HEK293 (cell line): ENCODE measurements at regions of chr7 and their contacts with region 1.

Region 1: DNA sequence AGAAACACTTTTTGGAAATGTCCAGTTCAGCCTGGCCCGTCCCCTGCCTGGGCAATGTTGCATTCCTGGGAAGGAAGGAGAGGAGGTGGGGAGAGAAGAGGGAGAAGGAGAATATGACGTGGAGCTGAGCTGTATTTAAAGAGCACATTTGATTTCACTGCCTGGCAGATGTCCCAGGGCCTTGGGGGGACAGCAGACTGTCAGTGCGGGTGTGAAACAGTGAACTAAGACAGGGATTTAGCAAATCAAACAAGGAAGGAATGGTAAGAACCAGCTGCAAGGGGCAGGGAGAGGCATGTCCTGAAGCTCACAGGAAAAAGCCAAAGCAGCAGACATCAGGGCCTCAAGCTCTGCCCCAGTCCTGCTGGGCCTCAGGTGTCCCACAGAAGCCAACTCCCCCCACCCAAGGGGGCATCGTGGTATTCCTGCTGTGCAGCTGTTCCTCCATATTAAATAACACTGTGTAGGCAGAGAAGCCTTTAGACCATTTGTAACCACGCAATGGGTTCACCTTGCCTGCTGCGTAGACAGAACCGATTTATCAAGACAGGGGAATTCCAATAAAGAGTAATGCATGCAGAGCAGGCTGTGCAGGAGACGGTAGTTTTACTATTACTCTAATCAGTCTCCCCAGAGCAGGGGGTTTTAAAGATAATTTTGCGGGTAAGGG is 18.2 kb downstream of the LEP start:
- H3K4me3 ChIP-seq: no peak overlapping the region
- H3K27ac ChIP-seq: no peak overlapping the region
- H3K4me1 ChIP-seq: no peaks in the 10 kb centered on the region
- CTCF ChIP-seq: no peak

Region 2: DNA sequence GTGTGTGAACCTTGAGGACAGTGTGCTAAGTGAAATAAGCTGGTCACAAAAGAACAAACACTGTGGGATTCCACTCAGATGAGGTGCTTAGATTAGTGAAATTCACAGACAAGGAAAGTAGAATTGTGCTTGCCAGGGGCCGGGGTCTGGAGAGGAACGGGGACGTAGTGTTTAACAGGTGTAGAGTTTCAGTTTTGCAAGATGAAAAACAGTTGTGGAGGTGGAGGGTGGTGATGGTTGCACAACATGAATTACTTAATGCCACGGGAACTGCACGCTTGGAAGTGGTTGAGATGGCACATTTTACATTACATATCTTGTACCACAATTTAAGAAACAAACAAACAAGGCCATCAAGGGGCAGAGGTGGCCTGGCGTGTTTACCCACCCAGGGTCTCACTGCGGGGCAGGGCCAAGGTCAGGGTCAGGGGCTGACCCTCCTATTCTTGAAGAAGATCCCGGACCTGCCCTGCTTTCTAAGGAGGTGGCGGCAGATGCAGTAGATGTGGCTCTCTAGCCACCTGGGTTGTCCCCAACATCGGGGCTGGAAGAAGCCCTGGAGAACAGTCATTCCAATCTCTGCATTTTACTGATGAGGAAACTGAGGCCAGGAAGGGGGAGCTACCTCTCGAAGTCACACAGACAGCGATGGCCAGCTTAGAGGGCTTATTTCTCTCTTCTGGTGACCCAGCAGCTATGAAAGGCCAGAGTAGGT is 136.5 kb before region 1 on chr7:
- CTCF ChIA-PET with region 1: no interaction called
- POLR2A ChIA-PET with region 1: interaction called, 11 read pairs
- H3K4me3 ChIP-seq: no peak overlapping the region
- H3K27ac ChIP-seq: no peak overlapping the region
- H3K4me1 ChIP-seq: no peaks in the 10 kb centered on the region
- CTCF ChIP-seq: no peak

Region 3: GRCh38 chr7:128361411-128362379 is 102.4 kb after region 1 on chr7 and contains the start of gene PRRT4:
- CTCF ChIA-PET with region 1: no interaction called
- POLR2A ChIA-PET with region 1: no interaction called
- H3K4me3 ChIP-seq: peak within 1 kb of the TSS; percentile 47
- H3K27ac ChIP-seq: peak within 1 kb of the TSS; percentile 31; the same call in 1 of the 2 replicates
- H3K4me1 ChIP-seq: no peaks in the 10 kb centered on the region; the same call in 1 of the 2 replicates
- CTCF ChIP-seq: peak; percentile 50; the same call in 1 of the 2 replicates

Region 4: DNA sequence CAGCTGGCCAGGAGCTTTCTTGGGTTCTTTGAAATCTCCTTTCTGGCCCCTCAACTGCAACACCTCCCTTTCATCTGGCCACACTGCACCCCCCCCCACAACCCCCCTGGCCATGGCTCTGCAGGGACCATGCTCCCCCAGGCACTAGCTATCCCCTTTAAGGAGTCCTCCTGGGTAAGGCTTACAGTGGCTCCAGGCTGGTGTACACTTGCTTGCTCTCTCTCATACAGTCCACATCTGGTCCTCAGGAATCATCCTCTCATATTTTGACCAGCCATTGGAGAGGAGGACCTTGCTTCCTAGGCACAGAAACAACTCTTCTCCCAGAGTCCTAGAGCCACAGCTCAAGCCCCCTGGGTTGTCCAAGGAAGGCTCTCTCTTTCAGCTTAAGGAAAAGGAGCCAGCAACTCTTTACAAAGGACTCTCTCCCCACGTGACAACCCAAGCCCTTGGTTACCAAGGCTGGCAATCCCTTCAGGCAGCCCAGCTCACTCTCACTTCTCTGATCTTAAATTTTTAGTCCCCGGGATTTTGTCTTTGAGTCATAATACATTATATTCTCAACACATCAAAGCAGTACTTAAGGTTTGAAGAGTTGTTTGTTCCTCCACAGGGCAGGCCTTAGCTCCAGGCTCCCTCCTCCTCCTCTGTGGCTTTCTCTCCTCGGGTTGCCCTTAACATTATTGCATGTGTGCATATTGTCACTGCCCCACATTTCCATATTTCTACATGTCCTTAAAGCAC is 422.7 kb after region 1 on chr7:
- CTCF ChIA-PET with region 1: no interaction called
- POLR2A ChIA-PET with region 1: no interaction called
- H3K4me3 ChIP-seq: no peak overlapping the region
- H3K27ac ChIP-seq: no peak overlapping the region
- H3K4me1 ChIP-seq: no peaks in the 10 kb centered on the region
- CTCF ChIP-seq: no peak